ENCODE measurements at regions of chr7 and their contacts with region 1.

Region 1: DNA sequence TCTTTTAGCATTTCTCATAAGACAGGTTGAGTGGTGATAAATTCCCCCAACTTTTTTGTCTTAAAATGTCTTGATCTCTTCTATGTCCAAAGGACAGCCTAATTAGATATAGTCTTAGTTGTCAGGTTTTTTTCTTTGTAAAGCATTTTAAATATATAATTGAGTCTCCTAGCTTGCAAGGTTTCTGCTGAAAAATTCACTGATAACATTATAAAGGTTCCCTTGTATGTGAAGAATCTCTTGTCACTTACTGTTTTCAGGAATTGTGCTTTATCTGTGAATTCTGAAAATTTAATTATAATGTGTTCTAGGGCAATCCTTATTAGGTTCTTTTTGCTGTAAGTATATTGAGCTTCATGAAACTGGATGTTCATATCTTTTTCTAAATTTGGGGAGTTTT is 96.8 kb upstream of the ZNF92 start:
- DNase-seq: no peak
- H3K4me3 Mint-ChIP-seq: no peak overlapping the region
- H3K27ac Mint-ChIP-seq: no peak overlapping the region
- H3K4me1 Mint-ChIP-seq: no peaks in the 10 kb centered on the region
- H3K27me3 Mint-ChIP-seq: peaks cover 20% of the 10 kb centered on the region

Region 2: DNA sequence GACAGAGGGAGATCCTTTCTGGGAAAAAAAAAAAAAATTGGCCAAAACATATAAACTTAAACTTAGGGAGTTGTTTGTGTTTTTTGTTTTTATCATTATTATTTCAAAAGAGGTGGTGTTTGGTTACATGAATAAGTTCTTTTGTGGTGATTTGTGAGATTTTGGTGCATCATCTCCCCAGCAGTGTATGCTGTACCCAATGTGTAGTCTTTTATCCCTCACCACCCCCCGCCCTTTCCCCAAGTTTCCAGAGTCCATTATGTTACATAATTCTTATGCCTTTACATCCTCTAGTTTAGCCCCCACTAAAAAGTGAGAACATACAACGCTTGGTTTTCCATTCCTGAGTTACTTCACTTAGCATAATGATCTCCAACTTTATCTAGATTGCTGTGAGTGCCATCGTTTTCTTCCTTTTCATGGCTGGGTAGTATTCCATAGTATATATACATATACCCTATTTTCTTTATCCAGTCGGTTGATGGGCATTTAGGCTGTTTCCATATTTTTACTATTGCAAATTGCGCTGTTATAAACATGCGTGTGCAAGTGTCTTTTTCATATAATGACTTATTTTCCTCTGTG is 51.3 kb before region 1 on chr7:
- CTCF ChIA-PET with region 1: no interaction called
- intact Hi-C with region 1: loop called (anchors 10 kb)
- DNase-seq: no peak
- H3K4me3 Mint-ChIP-seq: no peak overlapping the region
- H3K27ac Mint-ChIP-seq: no peak overlapping the region
- H3K4me1 Mint-ChIP-seq: no peaks in the 10 kb centered on the region
- H3K27me3 Mint-ChIP-seq: no peaks in the 10 kb centered on the region